GM12878 (cell line): ENCODE measurements at regions of chr19 and their contacts with region 1.

Region 1: DNA sequence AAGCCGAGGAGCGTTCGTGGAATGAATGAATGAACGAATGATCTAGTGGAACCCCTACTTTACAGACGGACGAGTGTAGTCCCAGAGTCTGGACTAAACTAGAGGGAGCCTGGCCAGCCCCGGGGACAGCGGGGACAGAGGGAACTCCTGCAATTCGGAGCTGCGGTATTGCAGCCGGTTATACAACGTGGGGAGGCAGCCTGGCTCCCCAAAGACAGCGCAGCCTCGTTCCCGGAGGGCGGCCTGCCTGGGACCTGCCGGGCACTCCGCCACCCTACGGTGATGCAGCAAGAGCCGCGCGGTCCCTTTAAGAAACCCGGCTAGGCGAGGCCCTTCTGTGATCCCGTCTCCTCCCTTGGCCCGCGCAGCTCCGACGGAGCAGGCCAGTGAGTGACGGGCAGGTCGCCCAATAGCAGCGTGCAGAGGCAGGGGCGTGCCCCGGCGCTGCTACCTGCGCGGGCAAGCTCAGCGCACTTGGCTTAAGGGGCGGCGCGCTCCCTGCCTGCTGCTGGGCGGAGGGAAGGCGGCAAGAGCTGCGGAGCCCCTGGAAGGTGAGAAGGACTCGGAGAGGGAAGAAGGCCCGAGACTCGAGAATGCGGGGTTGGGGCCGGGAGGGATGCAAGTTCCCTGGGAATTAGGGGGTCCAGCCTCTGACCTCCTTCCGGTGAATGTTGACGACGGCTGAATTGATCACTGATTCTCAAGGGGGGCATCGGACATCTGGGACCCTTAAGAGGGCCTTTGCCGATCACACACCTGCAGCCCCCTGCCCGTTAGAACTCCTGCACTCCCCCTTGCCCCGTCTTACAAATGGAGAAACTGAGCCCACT is at the start of gene ABCA7:
- DNase-seq: peak; percentile 93
- ATAC-seq: peak; percentile 90
- H3K4me3 ChIP-seq: peak within 1 kb of the TSS; percentile 79
- H3K27ac ChIP-seq: peak within 1 kb of the TSS; percentile 78
- H3K4me1 ChIP-seq: peaks cover 38% of the 10 kb centered on the region
- H3K27me3 ChIP-seq: no peaks in the 10 kb centered on the region
- CTCF ChIP-seq: peak in 1 of 3 experiments; percentile 4; a peak in 1 of 6 replicates
- EP300 ChIP-seq: no peak
- POLR2A ChIP-seq: peak; percentile 94
- RAD21 ChIP-seq: no peak
- polyA plus RNA-seq, gene ABCA7: 1.0 to 2.9 TPM

Region 2: GRCh38 chr19:1020868-1021425 is 18.9 kb before region 1 on chr19 and contains the start of gene TMEM259:
- CTCF ChIA-PET with region 1: interaction called, 5 read pairs
- POLR2A ChIA-PET with region 1: interaction called, 83 read pairs
- RAD21 ChIA-PET with region 1: interaction called, 39 read pairs
- SMC1A ChIA-PET with region 1: interaction called, 8 read pairs
- in situ Hi-C with region 1: no loop called
- intact Hi-C with region 1: no loop called
- DNase-seq: peak; percentile 92
- ATAC-seq: peak; percentile 86
- H3K4me3 ChIP-seq: peak within 1 kb of the TSS; percentile 83
- H3K27ac ChIP-seq: peak within 1 kb of the TSS; percentile 99
- H3K4me1 ChIP-seq: peaks cover 30% of the 10 kb centered on the region
- H3K27me3 ChIP-seq: no peaks in the 10 kb centered on the region
- CTCF ChIP-seq: no peak
- EP300 ChIP-seq: no peak
- POLR2A ChIP-seq: peak; percentile 82
- RAD21 ChIP-seq: no peak
- polyA plus RNA-seq, gene TMEM259: 0.43 to 0.86 TPM

Region 3: GRCh38 chr19:1026189-1027019 is 13.5 kb before region 1 on chr19 and contains the start of gene CNN2:
- CTCF ChIA-PET with region 1: interaction called, 11 read pairs
- POLR2A ChIA-PET with region 1: interaction called, 83 read pairs
- RAD21 ChIA-PET with region 1: interaction called, 39 read pairs
- SMC1A ChIA-PET with region 1: interaction called, 22 read pairs
- in situ Hi-C with region 1: no loop called
- intact Hi-C with region 1: no loop called
- DNase-seq: no peak
- ATAC-seq: peak; percentile 84
- H3K4me3 ChIP-seq: peak within 1 kb of the TSS; percentile 90
- H3K27ac ChIP-seq: peak within 1 kb of the TSS; percentile 92
- H3K4me1 ChIP-seq: peaks cover 6% of the 10 kb centered on the region
- H3K27me3 ChIP-seq: no peaks in the 10 kb centered on the region
- CTCF ChIP-seq: no peak
- EP300 ChIP-seq: no peak
- POLR2A ChIP-seq: peak; percentile 89
- RAD21 ChIP-seq: no peak
- polyA plus RNA-seq, gene CNN2: 34.7 to 42.5 TPM

Region 4: DNA sequence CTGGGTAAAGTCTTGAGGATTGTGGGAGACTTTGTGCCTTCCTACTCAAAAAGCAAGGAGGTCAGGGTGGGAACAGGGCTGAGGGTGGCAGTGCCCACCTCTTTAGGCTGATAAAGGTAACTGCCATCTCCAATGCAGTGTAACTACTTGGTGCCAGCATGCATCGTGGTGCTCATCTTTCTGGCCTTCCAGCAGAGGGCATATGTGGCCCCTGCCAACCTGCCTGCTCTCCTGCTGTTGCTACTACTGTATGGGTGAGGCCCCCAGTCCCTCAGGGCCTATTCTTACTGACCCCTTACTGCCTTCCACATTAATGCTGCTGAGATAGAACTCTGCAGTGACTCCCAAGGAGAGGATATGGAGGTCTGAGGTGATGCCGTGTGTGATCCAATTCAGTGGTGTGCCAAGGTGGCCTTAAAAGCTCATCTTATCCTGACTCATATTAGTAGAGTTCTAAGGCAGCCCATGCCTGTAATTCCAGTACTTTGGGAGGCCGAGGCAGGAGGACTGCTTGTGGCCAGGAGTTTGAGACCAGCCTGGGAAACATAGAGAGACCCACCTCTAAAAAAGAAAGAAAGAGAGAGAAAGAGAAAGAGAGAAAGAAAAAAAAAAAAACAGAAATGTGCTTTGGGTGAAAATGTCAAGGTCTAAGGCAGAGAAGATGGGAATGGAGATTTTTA is 17.5 kb after region 1 on chr19:
- CTCF ChIA-PET with region 1: interaction called, 10 read pairs
- POLR2A ChIA-PET with region 1: no interaction called
- RAD21 ChIA-PET with region 1: no interaction called
- SMC1A ChIA-PET with region 1: no interaction called
- in situ Hi-C with region 1: no loop called
- intact Hi-C with region 1: loop called (anchors 2 kb)
- DNase-seq: no peak
- ATAC-seq: peak; percentile 94
- H3K4me3 ChIP-seq: no peak overlapping the region
- H3K27ac ChIP-seq: no peak overlapping the region
- H3K4me1 ChIP-seq: no peaks in the 10 kb centered on the region
- H3K27me3 ChIP-seq: no peaks in the 10 kb centered on the region
- CTCF ChIP-seq: peak; percentile 41 to 74 (median 65); a peak in 5 of 6 replicates
- EP300 ChIP-seq: no peak
- POLR2A ChIP-seq: no peak
- RAD21 ChIP-seq: peak; percentile 27; the same call in 1 of the 2 replicates

Region 5: DNA sequence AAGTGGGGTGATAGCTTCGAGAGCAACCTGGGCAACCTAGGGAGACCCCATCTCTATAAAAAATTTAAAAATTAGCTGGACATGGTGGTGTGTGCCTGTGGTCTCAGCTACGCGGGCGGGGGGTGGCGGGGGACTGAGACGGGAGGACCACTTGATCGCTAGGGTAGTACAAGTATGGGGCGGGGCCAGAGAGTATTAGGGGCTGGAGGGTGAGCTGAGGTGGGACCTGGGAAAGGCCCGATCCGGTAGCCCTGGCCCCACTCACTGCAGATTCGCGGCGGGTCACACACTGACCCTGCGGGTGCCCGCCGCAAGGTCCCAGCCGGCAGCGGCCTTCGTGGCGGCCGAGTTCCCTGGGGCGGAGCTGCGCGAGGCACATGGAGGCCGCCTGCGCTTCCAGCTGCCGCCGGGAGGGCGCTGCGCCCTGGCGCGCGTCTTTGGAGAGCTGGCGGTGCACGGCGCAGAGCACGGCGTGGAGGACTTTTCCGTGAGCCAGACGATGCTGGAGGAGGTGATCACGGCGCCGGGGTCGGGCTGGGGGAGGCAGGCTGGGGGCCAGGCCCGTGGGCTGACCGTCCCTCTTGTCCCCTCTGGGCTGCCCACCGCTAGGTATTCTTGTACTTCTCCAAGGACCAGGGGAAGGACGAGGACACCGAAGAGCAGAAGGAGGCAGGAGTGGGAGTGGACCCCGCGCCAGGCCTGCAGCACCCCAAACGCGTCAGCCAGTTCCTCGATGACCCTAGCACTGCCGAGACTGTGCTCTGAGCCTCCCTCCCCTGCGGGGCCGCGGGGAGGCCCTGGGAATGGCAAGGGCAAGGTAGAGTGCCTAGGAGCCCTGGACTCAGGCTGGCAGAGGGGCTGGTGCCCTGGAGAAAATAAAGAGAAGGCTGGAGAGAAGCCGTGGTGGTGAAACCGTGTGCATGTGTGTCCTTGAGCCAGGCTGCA is 25.1 kb after region 1 on chr19:
- CTCF ChIA-PET with region 1: interaction called, 4 read pairs
- POLR2A ChIA-PET with region 1: interaction called, 32 read pairs
- RAD21 ChIA-PET with region 1: interaction called, 8 read pairs
- SMC1A ChIA-PET with region 1: interaction called, 4 read pairs
- in situ Hi-C with region 1: no loop called
- intact Hi-C with region 1: loop called (anchors 2 kb)
- DNase-seq: no peak
- ATAC-seq: peak; percentile 73
- H3K4me3 ChIP-seq: no peak overlapping the region
- H3K27ac ChIP-seq: no peak overlapping the region
- H3K4me1 ChIP-seq: peaks cover 17% of the 10 kb centered on the region
- H3K27me3 ChIP-seq: no peaks in the 10 kb centered on the region
- CTCF ChIP-seq: peak; percentile 73 to 85 (median 82)
- EP300 ChIP-seq: no peak; a peak in 1 of 4 replicates
- POLR2A ChIP-seq: no peak; the same call in 1 of the 2 replicates
- RAD21 ChIP-seq: peak; percentile 54

Region 6: GRCh38 chr19:1074544-1075283 is 34.9 kb after region 1 on chr19:
- CTCF ChIA-PET with region 1: no interaction called
- POLR2A ChIA-PET with region 1: interaction called, 13 read pairs
- RAD21 ChIA-PET with region 1: interaction called, 4 read pairs
- SMC1A ChIA-PET with region 1: interaction called, 3 read pairs
- in situ Hi-C with region 1: no loop called
- intact Hi-C with region 1: no loop called
- DNase-seq: no peak
- ATAC-seq: peak; percentile 41
- H3K4me3 ChIP-seq: peak overlapping the region; percentile 74; the same call in 1 of the 2 replicates
- H3K27ac ChIP-seq: no peak overlapping the region; the same call in 1 of the 2 replicates
- H3K4me1 ChIP-seq: peaks cover 32% of the 10 kb centered on the region
- H3K27me3 ChIP-seq: no peaks in the 10 kb centered on the region
- CTCF ChIP-seq: no peak
- EP300 ChIP-seq: no peak
- POLR2A ChIP-seq: no peak; the same call in none of the 2 replicates
- RAD21 ChIP-seq: no peak